Tibial artery (tissue), 4 donors: ENCODE measurements at regions of chr1 and their contacts with region 1.

Region 1: GRCh38 chr1:179779645-179780272 is 36.7 kb downstream of the FAM163A start:
- DNase-seq: no peak
- H3K4me3 ChIP-seq: no peak overlapping the region
- H3K27ac ChIP-seq: no peak overlapping the region
- H3K4me1 ChIP-seq: peaks cover 0 to 13% (median 4%) of the 10 kb centered on the region in 4 donors
- H3K27me3 ChIP-seq: no peaks in the 10 kb centered on the region
- CTCF ChIP-seq: no peak

Region 2: GRCh38 chr1:179856296-179856695 is 76.5 kb after region 1 on chr1:
- intact Hi-C with region 1: no loop called
- DNase-seq: no peak
- H3K4me3 ChIP-seq: no peak overlapping the region
- H3K27ac ChIP-seq: no peak overlapping the region
- H3K4me1 ChIP-seq: no peaks in the 10 kb centered on the region
- H3K27me3 ChIP-seq: no peaks in the 10 kb centered on the region
- CTCF ChIP-seq: no peak

Region 3: DNA sequence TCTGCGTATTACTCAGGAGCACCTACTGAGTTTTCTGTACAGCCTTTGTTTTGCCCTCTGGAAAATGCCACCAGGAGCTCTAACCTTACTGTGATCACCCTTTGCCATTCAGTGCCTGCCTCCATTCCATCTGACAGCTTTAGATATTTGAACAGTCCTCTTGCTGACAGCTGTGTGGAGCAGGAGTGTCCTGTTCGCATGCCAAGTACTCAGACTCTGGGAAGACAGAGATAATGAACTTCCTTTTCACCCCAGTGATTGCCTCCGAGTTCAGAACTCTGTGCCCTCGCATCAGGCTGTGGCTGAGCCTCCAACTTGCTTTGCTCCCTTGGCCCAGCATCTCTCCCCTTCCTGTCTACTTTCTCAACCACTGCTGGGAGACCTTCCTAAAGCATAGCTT is 1777.6 kb after region 1 on chr1:
- intact Hi-C with region 1: loop called (anchors 5 kb)
- DNase-seq: no peak
- H3K4me3 ChIP-seq: no peak overlapping the region
- H3K27ac ChIP-seq: no peak overlapping the region
- H3K4me1 ChIP-seq: no peaks in the 10 kb centered on the region
- H3K27me3 ChIP-seq: peaks cover 0 to 4% of the 10 kb centered on the region in 2 donors
- CTCF ChIP-seq: no peak